ENCODE measurements at regions of chr5 and their contacts with region 1.

Region 1: GRCh38 chr5:123582550-123583285 is 70.7 kb downstream of the CSNK1G3 start:
- DNase-seq: no peak
- H3K4me3 Mint-ChIP-seq: no peak overlapping the region
- H3K27ac Mint-ChIP-seq: no peak overlapping the region
- H3K4me1 Mint-ChIP-seq: no peaks in the 10 kb centered on the region
- H3K27me3 Mint-ChIP-seq: no peaks in the 10 kb centered on the region
- CTCF ChIP-seq: no peak

Region 2: GRCh38 chr5:123340926-123341325 is 241.8 kb before region 1 on chr5:
- CTCF ChIA-PET with region 1: no interaction called
- intact Hi-C with region 1: no loop called
- DNase-seq: no peak
- H3K4me3 Mint-ChIP-seq: no peak overlapping the region
- H3K27ac Mint-ChIP-seq: no peak overlapping the region
- H3K4me1 Mint-ChIP-seq: no peaks in the 10 kb centered on the region
- H3K27me3 Mint-ChIP-seq: no peaks in the 10 kb centered on the region
- CTCF ChIP-seq: no peak

Region 3: GRCh38 chr5:123594434-123594833 is 11.7 kb after region 1 on chr5:
- CTCF ChIA-PET with region 1: interaction called, 12 read pairs
- intact Hi-C with region 1: no loop called
- DNase-seq: no peak
- H3K4me3 Mint-ChIP-seq: no peak overlapping the region
- H3K27ac Mint-ChIP-seq: no peak overlapping the region
- H3K4me1 Mint-ChIP-seq: no peaks in the 10 kb centered on the region
- H3K27me3 Mint-ChIP-seq: no peaks in the 10 kb centered on the region
- CTCF ChIP-seq: no peak

Region 4: DNA sequence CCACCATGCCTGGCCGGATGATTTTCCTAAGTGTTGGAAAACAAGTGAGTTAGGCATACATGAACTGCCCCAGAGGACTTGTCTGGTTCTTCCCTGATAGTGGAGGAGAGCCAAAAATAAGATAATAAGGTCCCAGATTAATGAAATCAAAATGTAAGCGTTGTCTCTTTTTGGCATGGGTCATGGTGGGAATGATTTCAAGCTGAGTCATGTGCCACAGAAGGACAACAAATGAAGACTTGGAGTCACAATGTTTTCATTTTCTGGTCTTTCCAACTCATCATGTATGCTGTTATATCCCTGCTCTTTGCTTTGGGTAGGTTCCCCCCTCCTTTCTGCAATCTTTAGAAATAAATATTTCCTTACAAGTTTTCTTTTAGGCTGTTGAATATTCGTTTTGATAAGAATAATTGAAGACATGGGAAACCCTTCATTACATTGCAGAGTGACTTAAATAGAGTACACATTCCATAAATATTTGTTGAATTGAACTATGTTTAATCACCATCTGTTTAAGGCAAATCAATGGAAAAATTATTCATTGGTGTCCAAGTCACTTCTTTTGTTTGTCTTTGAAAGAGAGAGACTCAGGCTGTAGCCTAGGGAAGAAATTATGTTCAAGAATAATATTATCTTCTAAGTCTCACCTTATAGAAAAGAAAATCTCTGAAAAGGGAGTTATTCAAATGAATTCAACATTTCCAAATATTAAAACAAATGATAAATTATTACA is 125.5 kb after region 1 on chr5:
- CTCF ChIA-PET with region 1: no interaction called
- intact Hi-C with region 1: no loop called
- DNase-seq: no peak
- H3K4me3 Mint-ChIP-seq: no peak overlapping the region
- H3K27ac Mint-ChIP-seq: no peak overlapping the region
- H3K4me1 Mint-ChIP-seq: no peaks in the 10 kb centered on the region
- H3K27me3 Mint-ChIP-seq: no peaks in the 10 kb centered on the region
- CTCF ChIP-seq: no peak

Region 5: GRCh38 chr5:124043456-124043855 is 460.7 kb after region 1 on chr5:
- CTCF ChIA-PET with region 1: no interaction called
- intact Hi-C with region 1: no loop called
- DNase-seq: peak; percentile 25
- H3K4me3 Mint-ChIP-seq: no peak overlapping the region
- H3K27ac Mint-ChIP-seq: no peak overlapping the region
- H3K4me1 Mint-ChIP-seq: no peaks in the 10 kb centered on the region
- H3K27me3 Mint-ChIP-seq: no peaks in the 10 kb centered on the region
- CTCF ChIP-seq: no peak

Measured in Calu3 (cell line).